GM13977 (cell line): ENCODE measurements at regions of chr20 and their contacts with region 1.

Region 1: DNA sequence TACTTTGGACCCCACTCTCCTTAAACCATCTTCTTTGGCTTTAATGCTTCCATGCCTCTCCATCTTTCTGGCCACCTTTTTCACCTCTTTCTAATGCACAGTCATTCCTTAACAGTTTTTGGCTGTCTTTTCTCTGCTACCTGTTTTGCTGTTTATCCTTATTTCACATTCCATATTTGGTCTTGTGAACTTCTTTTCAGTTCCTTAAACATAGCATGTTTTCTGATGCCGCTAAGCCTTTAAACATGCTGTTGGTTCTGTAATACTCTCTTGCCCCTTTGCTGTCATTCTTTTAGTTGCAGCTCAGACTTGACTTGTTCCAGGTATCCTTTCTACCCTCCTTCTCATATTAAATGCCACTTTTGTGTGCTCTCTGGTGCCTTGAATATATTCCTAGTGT is 35.8 kb downstream of the TOP1 start:
- DNase-seq: peak; percentile 34
- CTCF ChIP-seq: peak; percentile 42

Region 2: GRCh38 chr20:40990542-40991120 is 73.7 kb before region 1 on chr20:
- in situ Hi-C with region 1: loop called (anchors 10 kb)
- DNase-seq: peak; percentile 73
- CTCF ChIP-seq: peak; percentile 91